ENCODE measurements at regions of chr1 and their contacts with region 1.

Region 1: DNA sequence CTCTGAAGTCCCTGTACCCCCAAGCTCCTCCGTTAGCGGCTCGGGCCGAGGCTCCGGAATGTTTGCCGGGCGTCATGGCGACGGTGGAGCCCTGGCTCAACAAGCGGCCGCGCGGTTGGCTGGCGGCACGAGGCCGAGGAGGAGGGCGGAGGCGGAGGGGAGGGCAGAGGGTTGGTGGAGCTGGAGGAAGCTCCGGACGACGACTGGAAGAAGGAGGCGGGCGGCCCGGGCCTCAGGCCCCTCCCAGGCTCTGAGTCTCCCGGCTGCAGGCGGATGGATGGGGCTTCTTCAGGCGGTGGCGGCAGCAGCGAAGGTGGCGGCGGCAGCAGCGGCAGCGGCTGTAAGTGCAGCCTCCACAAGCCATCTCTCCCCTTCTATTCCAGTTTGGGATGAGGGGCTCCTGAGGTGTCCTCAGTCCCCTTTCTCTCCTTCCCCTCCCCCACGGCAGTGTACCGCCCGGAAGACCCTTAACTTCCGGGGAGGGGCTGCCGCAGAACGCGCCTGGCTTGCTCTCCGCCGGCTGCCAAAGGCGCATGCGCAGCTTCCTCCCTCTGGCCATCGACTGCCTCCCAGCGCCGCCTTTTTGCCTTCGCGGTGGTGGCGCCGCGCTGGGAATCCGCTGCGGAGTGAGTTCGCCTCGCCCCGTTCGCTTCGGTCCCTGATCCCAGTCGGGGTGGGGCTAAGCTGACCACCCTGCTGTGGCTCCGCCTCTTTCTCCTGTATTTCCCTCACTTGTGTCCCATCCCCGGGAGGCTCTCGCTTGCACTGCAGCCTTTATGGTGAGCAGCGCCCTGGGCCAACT is at the starts of genes DNAI4 and MIER1:
- DNase-seq: peak; percentile 99
- H3K4me3 ChIP-seq: peak within 1 kb of the TSS; percentile 65 to 99 (median 86)
- H3K27ac ChIP-seq: peak within 1 kb of the TSS; percentile 99
- H3K4me1 ChIP-seq: peaks cover 15% of the 10 kb centered on the region
- H3K27me3 ChIP-seq: no peaks in the 10 kb centered on the region
- CTCF ChIP-seq: peak in 1 of 2 donors; percentile 33
- total RNA-seq, gene DNAI4: 2.9 to 6.0 TPM
- total RNA-seq, gene MIER1: 33.0 to 35.7 TPM

Region 2: DNA sequence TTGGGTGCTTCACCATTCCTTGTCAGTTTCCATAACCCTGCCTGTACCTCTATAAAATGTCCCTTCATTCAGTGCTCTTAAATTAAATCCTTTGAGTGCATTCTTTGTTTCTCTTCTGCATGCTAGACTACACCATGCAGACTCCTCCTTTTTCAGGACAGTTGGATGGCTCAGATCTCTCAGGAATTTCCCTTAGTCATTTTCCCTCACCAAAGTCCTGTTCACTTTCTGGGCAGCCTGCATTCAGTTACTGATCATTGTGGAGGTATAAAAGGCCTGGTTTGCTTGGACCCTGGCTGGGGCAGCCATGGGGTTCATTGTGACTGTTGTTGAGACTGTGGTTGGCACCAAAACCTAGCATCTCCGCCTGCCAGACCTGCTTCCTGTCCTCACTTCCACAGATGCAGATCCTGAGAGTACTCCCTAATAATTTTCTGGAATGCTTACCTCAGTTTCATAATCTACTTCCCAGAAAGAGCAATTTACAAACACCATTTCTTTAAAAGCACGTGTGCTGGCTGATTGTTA is 1043.8 kb before region 1 on chr1:
- CTCF ChIA-PET with region 1: no interaction called
- dilution Hi-C with region 1: no loop called
- in situ Hi-C with region 1: no loop called
- intact Hi-C with region 1: no loop called
- DNase-seq: no peak
- H3K4me3 ChIP-seq: no peak overlapping the region
- H3K27ac ChIP-seq: no peak overlapping the region
- H3K4me1 ChIP-seq: no peaks in the 10 kb centered on the region
- H3K27me3 ChIP-seq: no peaks in the 10 kb centered on the region
- CTCF ChIP-seq: no peak

Region 3: DNA sequence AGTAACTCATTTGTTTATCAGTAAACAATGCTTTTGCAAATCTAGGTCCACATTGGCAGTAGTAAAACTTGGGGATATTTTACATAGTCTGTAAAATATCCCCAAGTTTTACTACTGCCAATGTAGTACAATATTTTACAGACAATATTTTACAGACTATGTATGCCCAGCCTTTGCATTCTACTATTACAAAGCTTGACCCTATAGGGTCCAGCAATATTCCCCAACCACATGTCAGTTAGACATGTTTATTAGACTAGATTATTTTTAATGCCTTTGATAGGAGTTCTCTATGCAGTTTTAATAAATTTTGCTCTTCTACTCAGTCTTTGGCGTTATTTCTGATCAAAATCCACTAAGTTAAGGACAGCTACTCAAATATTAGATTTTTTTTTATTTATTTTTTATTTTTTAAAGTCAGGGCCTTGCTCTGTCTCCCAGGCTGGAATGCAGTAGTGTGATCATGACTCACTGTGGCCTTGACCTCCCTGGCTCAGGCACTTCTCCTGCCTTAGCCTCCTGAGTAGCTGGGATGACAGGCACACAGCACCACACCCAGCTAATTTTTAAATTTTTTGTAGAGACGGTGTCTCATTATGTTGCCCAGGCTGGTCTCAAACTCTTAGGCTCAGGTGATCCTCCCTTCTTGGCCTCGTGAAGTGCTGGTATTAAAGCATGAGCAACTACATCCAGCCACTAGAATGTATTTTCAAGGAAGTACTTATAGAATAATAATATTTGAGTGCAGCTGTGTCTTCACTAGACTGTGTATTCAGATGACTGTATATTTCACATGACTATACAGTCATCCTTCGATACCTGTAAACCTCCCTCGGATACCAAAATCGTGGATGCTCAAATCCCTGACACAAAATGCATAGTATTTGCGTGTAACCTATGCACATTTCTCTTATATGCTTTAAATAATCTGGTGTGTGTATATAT is 19.6 kb after region 1 on chr1:
- CTCF ChIA-PET with region 1: no interaction called
- dilution Hi-C with region 1: no loop called
- in situ Hi-C with region 1: no loop called
- intact Hi-C with region 1: loop called (anchors 2 kb)
- DNase-seq: peak; percentile 86
- H3K4me3 ChIP-seq: no peak overlapping the region
- H3K27ac ChIP-seq: peak overlapping the region; percentile 69
- H3K4me1 ChIP-seq: peaks cover 17% of the 10 kb centered on the region
- H3K27me3 ChIP-seq: no peaks in the 10 kb centered on the region
- CTCF ChIP-seq: no peak

Region 4: GRCh38 chr1:67134695-67135094 is 209.7 kb after region 1 on chr1 and contains the start of gene C1orf141:
- CTCF ChIA-PET with region 1: no interaction called
- dilution Hi-C with region 1: no loop called
- in situ Hi-C with region 1: no loop called
- intact Hi-C with region 1: no loop called
- DNase-seq: no peak
- H3K4me3 ChIP-seq: no peak within 1 kb of the TSS
- H3K27ac ChIP-seq: no peak within 1 kb of the TSS
- H3K4me1 ChIP-seq: peaks cover 7% of the 10 kb centered on the region
- H3K27me3 ChIP-seq: no peaks in the 10 kb centered on the region
- CTCF ChIP-seq: no peak
- total RNA-seq, gene C1orf141: not detected

Region 5: GRCh38 chr1:67239738-67240137 is 314.8 kb after region 1 on chr1:
- CTCF ChIA-PET with region 1: no interaction called
- dilution Hi-C with region 1: no loop called
- in situ Hi-C with region 1: no loop called
- intact Hi-C with region 1: no loop called
- DNase-seq: no peak
- H3K4me3 ChIP-seq: no peak overlapping the region
- H3K27ac ChIP-seq: no peak overlapping the region
- H3K4me1 ChIP-seq: no peaks in the 10 kb centered on the region
- H3K27me3 ChIP-seq: no peaks in the 10 kb centered on the region
- CTCF ChIP-seq: no peak